ENCODE measurements at regions of chr1 and their contacts with region 1.

Region 1: GRCh38 chr1:17617787-17618557 is 78.5 kb downstream of the ARHGEF10L start:
- DNase-seq: no peak

Region 2: DNA sequence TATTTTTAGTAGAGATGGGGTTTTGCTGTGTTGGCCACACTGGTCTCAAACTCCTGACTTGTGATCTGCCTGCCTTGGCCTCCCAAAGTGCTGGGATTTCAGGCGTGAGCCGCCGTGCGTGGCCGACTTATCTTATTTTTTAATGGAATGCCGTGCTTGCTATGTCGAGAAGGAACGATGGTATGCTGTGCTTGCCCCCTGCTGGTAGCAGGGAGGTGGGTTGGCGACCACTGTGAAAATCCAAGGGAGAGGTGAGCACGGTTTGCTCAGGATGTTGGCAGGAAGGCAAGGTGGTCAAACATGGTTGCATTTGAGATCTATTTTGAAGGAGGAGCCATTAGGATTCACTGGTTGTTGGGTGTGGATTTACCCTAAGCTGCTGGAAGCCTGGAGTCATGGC is 132.7 kb before region 1 on chr1:
- in situ Hi-C with region 1: no loop called
- DNase-seq: peak; percentile 44

Region 3: GRCh38 chr1:17502326-17502778 is 115.6 kb before region 1 on chr1:
- in situ Hi-C with region 1: loop called (anchors 10 kb)
- DNase-seq: peak; percentile 63

Measured in KBM-7 (cell line).